Kidney (tissue), 22 donors: ENCODE measurements at regions of chr12 and their contacts with region 1.

Region 1: DNA sequence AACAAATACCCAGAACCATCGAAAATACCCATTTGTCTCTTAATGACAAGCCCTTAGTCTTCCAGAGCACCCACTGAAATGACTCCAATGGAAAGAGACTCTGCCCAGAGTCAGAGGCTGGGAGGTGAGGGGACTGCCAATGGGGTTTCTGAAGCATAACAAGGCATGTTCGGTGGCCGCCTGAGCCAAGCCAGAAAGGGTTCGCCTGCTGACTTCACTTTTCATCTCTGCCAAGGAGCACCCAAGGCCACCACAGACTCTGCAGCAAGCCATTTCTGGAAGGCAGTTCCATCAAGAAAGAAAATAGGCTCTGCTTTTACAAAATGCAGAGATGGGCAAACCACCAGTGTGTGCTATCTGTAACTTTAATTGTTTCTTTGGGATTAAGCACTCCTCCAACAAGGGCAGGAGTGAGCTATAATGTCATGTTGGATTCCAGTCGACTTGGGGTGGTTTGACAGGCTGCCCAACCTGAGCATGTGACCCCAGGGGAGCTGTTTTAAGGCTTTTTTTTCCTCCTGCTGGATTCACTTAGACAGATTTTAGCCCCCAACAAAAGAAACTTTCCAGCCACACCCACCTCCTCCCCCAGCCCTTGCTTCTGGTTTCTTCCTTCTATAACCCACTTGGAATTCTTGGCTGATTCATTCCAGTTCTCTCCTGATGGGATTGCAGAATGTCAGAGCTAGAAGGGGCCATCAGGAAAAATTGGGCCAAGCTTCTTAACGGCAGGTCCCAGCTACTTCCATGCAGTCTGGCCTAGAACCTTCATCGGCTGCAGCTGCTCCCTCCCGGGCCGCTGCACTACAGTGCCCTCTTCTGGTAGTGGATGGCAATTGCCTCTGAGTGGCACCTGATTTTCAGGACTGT is 24.1 kb downstream of the CKAP4 start:
- DNase-seq: peak; percentile 72 to 86 (median 84)
- H3K4me3 ChIP-seq: no peak overlapping the region
- H3K27ac ChIP-seq: no peak overlapping the region
- H3K4me1 ChIP-seq: no peaks in the 10 kb centered on the region
- H3K27me3 ChIP-seq: no peaks in the 10 kb centered on the region
- CTCF ChIP-seq: peak; percentile 87

Region 2: DNA sequence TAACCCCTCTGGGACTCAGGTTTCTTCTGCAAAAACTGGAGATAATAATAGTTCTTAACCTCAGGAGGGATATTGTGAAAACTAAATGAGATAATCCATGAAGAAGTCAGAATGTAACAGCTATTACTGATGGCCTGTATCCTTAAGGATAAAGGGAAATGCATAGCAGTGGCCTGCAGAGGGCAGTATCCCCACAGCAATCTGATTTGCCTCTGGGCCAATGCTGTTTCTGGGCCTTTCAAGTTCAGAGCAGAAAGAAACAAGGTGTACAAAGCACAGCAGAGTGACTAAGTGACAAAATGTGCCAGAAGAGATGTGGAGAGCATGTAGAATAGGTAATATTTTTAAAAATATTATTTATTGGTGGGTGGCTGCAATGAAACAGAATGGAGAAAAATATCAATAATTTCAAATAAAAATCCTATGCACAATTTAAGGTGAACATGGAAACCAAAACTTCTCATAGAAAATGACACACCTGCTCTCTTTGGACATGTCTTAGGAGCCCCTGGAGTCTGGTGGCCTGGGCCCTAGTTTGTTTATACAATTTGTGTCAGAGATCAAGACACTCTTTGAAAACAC is 803.0 kb before region 1 on chr12:
- intact Hi-C with region 1: loop called (anchors 10 kb)
- DNase-seq: peak in 4 of 5 donors; percentile 82 to 90 (median 85)
- H3K4me3 ChIP-seq: no peak overlapping the region
- H3K27ac ChIP-seq: no peak overlapping the region
- H3K4me1 ChIP-seq: no peaks in the 10 kb centered on the region
- H3K27me3 ChIP-seq: no peaks in the 10 kb centered on the region
- CTCF ChIP-seq: peak; percentile 95